Naive thymus-derived CD8-positive, alpha-beta T cell (primary cell): ENCODE measurements at regions of chr17 and their contacts with region 1.

Region 1: DNA sequence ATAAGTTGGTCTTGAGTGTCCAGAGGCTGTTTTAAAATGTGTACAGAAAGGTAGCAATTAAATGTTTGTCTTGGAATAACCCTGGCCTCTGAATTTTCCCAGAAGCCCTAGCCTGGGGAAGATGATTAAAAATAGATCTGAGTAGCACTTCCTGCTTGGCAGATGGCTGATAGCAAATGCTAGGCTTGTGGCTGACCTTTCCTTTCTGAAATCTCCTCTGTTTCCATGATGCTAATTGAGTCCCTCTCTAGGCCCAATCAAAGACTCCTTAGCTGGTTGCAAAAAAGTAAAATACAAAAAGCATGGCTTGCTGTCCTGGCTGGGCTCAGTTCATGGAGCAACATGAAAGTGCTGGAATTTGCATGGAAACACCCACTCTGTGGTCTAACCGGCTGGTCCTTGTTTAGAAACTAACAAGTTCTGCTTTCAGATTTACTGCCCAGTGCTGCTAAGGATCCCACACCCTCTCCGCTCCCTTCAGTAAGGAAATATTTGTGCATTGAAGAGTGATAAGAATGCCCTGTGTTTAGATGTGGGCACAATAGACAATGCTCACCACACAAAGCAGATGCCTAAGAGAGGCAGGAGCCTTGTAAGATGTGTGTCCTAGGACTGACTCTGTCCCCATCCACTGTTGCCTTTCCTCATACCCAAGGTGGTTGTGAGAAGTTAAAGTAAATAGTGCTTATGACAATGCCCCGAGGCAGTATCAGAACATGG is 40.8 kb downstream of the YPEL2 start:
- DNase-seq: no peak
- ATAC-seq: no peak
- H3K4me3 Mint-ChIP-seq: peak overlapping the region in 9 of 10 donors; percentile 53 to 78 (median 62)
- H3K27ac Mint-ChIP-seq: peak overlapping the region; percentile 68 to 96 (median 90)
- H3K4me1 Mint-ChIP-seq: peaks cover 58 to 95% (median 88%) of the 10 kb centered on the region in 4 donors
- H3K27me3 Mint-ChIP-seq: no peaks in the 10 kb centered on the region

Region 2: GRCh38 chr17:59342681-59343131 is 29.6 kb before region 1 on chr17:
- POLR2A ChIA-PET with region 1: no interaction called
- DNase-seq: no peak
- ATAC-seq: peak; percentile 73 to 77
- H3K4me3 Mint-ChIP-seq: peak overlapping the region in 8 of 10 donors; percentile 0 to 54 (median 44)
- H3K27ac Mint-ChIP-seq: peak overlapping the region; percentile 35 to 89 (median 67)
- H3K4me1 Mint-ChIP-seq: peaks cover 58 to 83% (median 78%) of the 10 kb centered on the region in 4 donors
- H3K27me3 Mint-ChIP-seq: no peaks in the 10 kb centered on the region

Region 3: GRCh38 chr17:59361916-59362810 is 10.1 kb before region 1 on chr17:
- POLR2A ChIA-PET with region 1: interaction called, 46 read pairs
- DNase-seq: peak in 8 of 10 donors; percentile 12 to 75 (median 38)
- ATAC-seq: peak; percentile 64 to 72
- H3K4me3 Mint-ChIP-seq: peak overlapping the region; percentile 75 to 91 (median 85)
- H3K27ac Mint-ChIP-seq: peak overlapping the region; percentile 88 to 99 (median 96)
- H3K4me1 Mint-ChIP-seq: peaks cover 42 to 96% (median 91%) of the 10 kb centered on the region in 4 donors
- H3K27me3 Mint-ChIP-seq: no peaks in the 10 kb centered on the region